ENCODE measurements at regions of chr17 and their contacts with region 1.

Region 1: DNA sequence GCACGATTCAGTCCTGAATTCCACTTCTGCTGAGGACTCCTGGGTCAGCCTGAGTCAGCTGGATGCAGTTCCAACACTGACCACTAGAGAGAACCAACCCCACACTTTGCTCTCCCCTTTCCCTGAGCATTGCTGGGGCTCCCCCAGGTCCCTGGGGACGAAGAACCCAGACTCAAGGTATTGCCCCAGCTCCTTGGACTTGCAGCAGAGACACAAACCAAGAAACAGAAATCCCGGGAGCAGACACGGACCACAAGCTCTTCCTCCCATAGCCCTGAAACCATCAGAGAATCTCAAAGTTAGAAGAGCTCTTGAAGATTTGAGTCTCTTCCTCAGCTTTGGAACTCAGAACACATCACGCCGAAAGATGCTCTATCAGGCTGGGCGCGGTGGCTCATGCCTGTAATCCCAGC is 678 bp upstream of the GH1 start:
- DNase-seq: peak; percentile 86
- H3K4me3 Mint-ChIP-seq: no peak overlapping the region
- H3K27ac Mint-ChIP-seq: no peak overlapping the region
- H3K4me1 Mint-ChIP-seq: peaks cover 5% of the 10 kb centered on the region
- H3K27me3 Mint-ChIP-seq: no peaks in the 10 kb centered on the region

Region 2: GRCh38 chr17:63571763-63572271 is 347.5 kb before region 1 on chr17:
- CTCF ChIA-PET with region 1: no interaction called
- intact Hi-C with region 1: no loop called
- DNase-seq: no peak
- H3K4me3 Mint-ChIP-seq: no peak overlapping the region
- H3K27ac Mint-ChIP-seq: no peak overlapping the region
- H3K4me1 Mint-ChIP-seq: peaks cover 24% of the 10 kb centered on the region
- H3K27me3 Mint-ChIP-seq: no peaks in the 10 kb centered on the region

Region 3: GRCh38 chr17:63931099-63931561 is 11.8 kb after region 1 on chr17:
- CTCF ChIA-PET with region 1: interaction called, 50 read pairs
- intact Hi-C with region 1: no loop called
- DNase-seq: peak; percentile 68
- H3K4me3 Mint-ChIP-seq: peak overlapping the region; percentile 93
- H3K27ac Mint-ChIP-seq: peak overlapping the region; percentile 76
- H3K4me1 Mint-ChIP-seq: peaks cover 17% of the 10 kb centered on the region
- H3K27me3 Mint-ChIP-seq: no peaks in the 10 kb centered on the region

Region 4: DNA sequence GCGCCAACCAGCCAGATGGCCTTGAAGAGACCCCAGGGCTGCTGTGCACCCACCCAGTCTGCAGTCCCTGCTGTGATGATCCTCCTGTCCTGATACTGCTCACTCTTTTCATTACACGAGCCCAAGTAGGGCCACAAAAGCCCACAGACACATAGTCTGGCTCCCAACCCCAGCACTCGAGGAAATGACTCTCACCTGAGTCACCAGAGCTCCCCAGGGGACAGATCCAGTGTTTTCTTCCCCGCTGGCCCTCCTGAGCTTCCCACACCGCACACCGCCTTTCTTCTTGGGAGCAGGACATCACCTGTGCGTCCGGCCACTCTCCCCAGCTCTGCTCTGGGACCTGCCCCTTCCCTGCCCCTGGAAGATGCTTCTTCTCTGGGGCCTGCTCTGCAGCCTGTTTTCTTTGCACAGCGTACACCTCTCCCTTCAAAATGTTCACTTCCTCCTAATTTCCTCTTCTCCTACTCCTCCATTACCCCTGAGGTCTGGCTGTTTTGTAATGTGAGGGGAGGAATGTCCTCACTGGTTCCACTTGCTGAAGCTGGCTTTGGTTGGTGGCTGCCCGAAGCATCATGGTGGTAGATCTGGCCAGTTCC is 55.4 kb after region 1 on chr17:
- CTCF ChIA-PET with region 1: interaction called, 15 read pairs
- intact Hi-C with region 1: no loop called
- DNase-seq: no peak
- H3K4me3 Mint-ChIP-seq: no peak overlapping the region
- H3K27ac Mint-ChIP-seq: no peak overlapping the region
- H3K4me1 Mint-ChIP-seq: peaks cover 12% of the 10 kb centered on the region
- H3K27me3 Mint-ChIP-seq: no peaks in the 10 kb centered on the region

Region 5: DNA sequence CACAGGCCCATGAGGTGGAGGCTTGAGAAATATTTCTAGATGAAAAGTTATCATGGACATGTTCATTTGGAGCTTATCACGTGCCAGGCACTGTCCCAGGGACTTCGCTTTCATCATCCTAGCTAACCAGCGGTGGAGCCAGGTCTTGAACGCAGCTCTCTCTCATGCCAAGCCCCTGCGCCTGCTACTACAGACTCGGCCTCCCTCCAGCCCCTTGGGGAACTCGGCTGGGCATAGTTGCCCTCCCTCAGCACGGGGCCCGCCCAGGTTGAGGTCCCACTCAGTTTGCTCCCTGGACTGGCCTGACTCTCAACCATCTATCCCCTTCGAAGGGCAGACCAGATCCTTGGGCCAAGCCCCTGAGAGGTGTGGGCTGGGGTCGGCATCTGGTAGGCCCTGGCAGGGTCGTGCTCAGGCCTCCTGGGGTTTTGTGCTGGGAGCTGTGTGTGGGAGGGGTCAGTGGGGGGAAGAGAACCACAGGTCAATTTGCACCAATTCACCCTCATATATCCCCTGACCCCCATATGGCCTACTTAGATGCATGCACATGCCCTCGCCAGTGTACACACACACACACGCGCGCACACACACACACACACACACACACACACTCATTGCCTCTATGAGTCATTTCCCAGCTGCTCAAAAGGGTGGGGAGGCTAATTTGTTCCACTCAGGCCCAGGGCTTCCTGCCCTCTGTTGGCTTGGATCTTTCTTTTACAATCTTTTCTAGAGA is 65.5 kb after region 1 on chr17:
- CTCF ChIA-PET with region 1: interaction called, 23 read pairs
- intact Hi-C with region 1: loop called (anchors 1 kb)
- DNase-seq: peak; percentile 82
- H3K4me3 Mint-ChIP-seq: no peak overlapping the region
- H3K27ac Mint-ChIP-seq: peak overlapping the region; percentile 56
- H3K4me1 Mint-ChIP-seq: peaks cover 13% of the 10 kb centered on the region
- H3K27me3 Mint-ChIP-seq: no peaks in the 10 kb centered on the region

Region 6: DNA sequence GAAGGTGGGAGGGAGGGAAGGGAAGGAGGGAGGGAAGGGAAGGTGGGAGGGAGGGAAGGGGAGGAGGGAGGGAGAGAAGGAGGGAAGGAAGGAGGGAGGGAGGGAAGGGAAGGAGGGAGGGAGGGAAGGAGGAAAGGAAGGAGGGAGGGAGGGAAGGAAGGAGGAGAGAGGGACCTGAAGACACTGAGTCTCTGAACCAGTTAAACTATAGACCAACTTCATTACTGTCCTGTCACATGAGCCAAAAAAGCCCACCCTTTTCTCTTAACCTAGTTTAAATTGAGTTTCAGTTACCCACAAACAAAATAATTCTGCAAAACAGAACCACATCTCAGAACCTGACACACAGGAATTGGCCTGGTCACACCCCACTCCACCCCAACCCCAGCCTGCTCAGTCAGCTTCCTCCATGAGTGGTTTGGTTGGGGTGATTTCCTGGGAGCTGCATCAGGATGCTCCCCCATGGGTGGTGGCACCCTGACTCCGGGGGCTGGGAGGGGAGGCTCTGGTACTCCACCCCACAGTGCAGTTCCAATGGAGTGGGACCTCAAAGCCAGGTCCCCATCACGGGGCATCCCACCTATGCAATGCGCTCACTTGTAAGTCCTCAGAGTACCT is 74.2 kb after region 1 on chr17:
- CTCF ChIA-PET with region 1: interaction called, 23 read pairs
- intact Hi-C with region 1: loop called (anchors 1 kb)
- DNase-seq: no peak
- H3K4me3 Mint-ChIP-seq: no peak overlapping the region
- H3K27ac Mint-ChIP-seq: no peak overlapping the region
- H3K4me1 Mint-ChIP-seq: peaks cover 29% of the 10 kb centered on the region
- H3K27me3 Mint-ChIP-seq: no peaks in the 10 kb centered on the region

Measured in activated naive CD4-positive, alpha-beta T cell treated with anti-CD3 and anti-CD28 coated beads for 36 hours (primary cell).